H1 (cell line): ENCODE measurements at regions of chr1 and their contacts with region 1.

Region 1: GRCh38 chr1:47449822-47450552 is 12.1 kb downstream of the FOXD2 start:
- DNase-seq: peak in 1 of 2 experiments; percentile 94
- H3K4me3 ChIP-seq: peak overlapping the region in 1 of 4 experiments; percentile 46; a peak in 4 of 8 replicates
- H3K27ac ChIP-seq: no peak overlapping the region
- H3K4me1 ChIP-seq: peaks cover 4 to 24% (median 16%) of the 10 kb centered on the region in 4 experiments
- H3K27me3 ChIP-seq: peaks cover 67 to 74% (median 72%) of the 10 kb centered on the region in 4 experiments
- CTCF ChIP-seq: peak; percentile 87 to 93 (median 93)
- EP300 ChIP-seq: no peak
- POLR2A ChIP-seq: no peak
- RAD21 ChIP-seq: peak; percentile 80 to 87

Region 2: GRCh38 chr1:47437447-47438164 is 12.4 kb before region 1 on chr1 and contains the start of gene FOXD2:
- CTCF ChIA-PET with region 1: interaction called, 46 read pairs
- POLR2A ChIA-PET with region 1: interaction called, 4 read pairs
- DNase-seq: peak; percentile 61 to 99
- H3K4me3 ChIP-seq: peak within 1 kb of the TSS; percentile 16 to 65 (median 49)
- H3K27ac ChIP-seq: no peak within 1 kb of the TSS
- H3K4me1 ChIP-seq: peaks cover 3 to 36% (median 18%) of the 10 kb centered on the region in 4 experiments
- H3K27me3 ChIP-seq: peaks cover 92 to 99% (median 98%) of the 10 kb centered on the region in 4 experiments
- CTCF ChIP-seq: peak in 2 of 3 experiments; percentile 54 to 68; a peak in 3 of 4 replicates
- EP300 ChIP-seq: no peak
- POLR2A ChIP-seq: no peak
- RAD21 ChIP-seq: peak; percentile 30 to 38; a peak in 3 of 4 replicates
- total RNA-seq, gene FOXD2: not detected in 2 replicates

Region 3: GRCh38 chr1:47491341-47491753 is 41.4 kb after region 1 on chr1:
- CTCF ChIA-PET with region 1: interaction called, 11 read pairs
- POLR2A ChIA-PET with region 1: no interaction called
- DNase-seq: no peak
- H3K4me3 ChIP-seq: no peak overlapping the region
- H3K27ac ChIP-seq: no peak overlapping the region
- H3K4me1 ChIP-seq: peaks cover 0 to 6% (median 4%) of the 10 kb centered on the region in 4 experiments; a peak in 4 of 7 replicates
- H3K27me3 ChIP-seq: peaks cover 0 to 9% (median 4%) of the 10 kb centered on the region in 4 experiments; a peak in 5 of 7 replicates
- CTCF ChIP-seq: 0 out of 4 replicates have a peak, but pooled peaks of 1 of the 3 experiments have one; percentile 4
- EP300 ChIP-seq: no peak
- POLR2A ChIP-seq: no peak
- RAD21 ChIP-seq: peak in 1 of 2 experiments; percentile 11; a peak in 1 of 4 replicates

Region 4: DNA sequence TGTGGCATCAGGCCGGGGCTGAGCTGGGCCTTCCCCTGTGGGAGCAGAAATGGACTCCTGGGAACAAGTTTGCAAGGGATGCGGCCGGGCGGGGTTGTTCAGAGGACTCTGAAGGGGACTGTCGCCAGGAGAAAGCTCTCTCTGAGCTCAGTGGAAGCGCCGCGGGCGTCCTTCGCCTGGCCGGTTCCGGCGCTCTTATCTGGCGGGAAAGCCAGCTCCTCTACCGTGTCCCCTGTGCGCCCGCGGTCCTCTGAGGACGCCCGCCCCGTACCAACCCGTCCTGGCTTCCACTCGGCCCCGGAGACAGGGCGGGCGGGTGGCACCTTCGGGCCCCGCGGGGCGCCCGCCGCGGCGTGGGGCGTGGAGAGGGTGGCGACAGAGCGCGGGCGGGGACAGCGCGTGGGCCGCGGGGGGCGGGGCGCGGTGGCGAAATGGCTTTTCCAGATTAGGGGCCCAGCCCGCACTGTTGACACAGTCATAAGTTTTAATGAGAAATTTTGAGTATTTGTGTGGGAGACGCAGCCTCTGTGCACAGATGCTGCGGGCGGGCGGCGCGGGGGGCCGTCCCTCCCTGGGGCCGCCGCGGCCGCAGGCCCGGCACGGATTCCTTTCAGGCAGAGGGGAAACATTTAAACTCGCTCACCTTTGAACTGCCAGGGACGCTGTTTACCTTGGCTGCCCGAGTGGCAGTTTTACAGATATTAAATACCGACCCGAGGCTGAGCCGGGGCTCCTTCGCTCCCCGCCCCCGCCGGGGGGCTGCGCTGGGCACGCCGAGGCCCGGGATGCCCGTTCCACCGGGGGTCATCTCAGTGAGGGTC is 58.1 kb after region 1 on chr1:
- CTCF ChIA-PET with region 1: interaction called, 29 read pairs
- POLR2A ChIA-PET with region 1: no interaction called
- DNase-seq: peak in 1 of 2 experiments; percentile 57
- H3K4me3 ChIP-seq: peak overlapping the region; percentile 32 to 66 (median 43)
- H3K27ac ChIP-seq: no peak overlapping the region
- H3K4me1 ChIP-seq: peaks cover 0 to 5% (median 2%) of the 10 kb centered on the region in 4 experiments; a peak in 3 of 7 replicates
- H3K27me3 ChIP-seq: peaks cover 22 to 53% (median 47%) of the 10 kb centered on the region in 4 experiments
- CTCF ChIP-seq: no peak
- EP300 ChIP-seq: no peak
- POLR2A ChIP-seq: no peak
- RAD21 ChIP-seq: no peak

Region 5: DNA sequence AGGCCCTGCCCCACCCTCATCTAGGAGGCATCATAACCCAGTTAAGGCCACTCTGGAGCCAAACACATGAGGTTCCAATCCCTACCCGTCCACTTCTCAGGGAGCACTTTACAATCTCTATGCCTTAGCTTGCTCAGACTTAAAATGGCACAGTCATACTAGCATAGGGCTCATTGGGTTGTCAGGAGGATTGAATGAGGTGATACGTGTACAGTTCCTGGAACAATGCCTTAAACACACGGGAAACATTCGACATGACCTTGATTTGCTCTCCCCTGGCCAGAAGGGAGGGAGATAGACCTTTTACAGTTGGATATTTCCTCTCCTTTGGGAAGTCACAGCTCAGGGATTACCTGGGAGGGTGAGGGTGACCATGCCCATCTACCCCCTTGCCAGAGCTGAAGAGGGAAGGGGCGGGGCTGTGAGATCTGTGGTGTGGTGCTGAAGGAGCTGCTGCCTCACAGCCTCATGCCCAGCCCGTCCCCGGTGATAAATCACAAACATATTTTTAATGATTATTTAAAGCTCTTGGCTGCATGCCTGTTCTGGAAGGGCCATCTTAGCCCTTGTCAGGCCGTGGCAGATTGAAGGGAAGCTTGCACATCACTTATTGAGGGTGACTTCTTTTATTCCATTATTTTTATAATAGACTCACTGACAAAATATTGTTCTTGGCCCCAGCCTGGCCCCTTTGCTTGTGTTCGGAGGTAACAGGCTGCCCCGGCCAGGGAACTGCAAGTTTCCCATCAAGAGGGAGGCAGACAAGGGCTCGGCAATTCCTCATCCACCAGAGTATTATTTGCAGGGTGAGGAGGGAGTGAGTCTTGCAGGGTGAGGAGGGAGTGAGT is 71.3 kb after region 1 on chr1:
- CTCF ChIA-PET with region 1: interaction called, 30 read pairs
- POLR2A ChIA-PET with region 1: no interaction called
- DNase-seq: no peak
- H3K4me3 ChIP-seq: no peak overlapping the region
- H3K27ac ChIP-seq: no peak overlapping the region
- H3K4me1 ChIP-seq: peaks cover 3 to 16% (median 6%) of the 10 kb centered on the region in 4 experiments; a peak in 6 of 7 replicates
- H3K27me3 ChIP-seq: peaks cover 0 to 4% (median 0%) of the 10 kb centered on the region in 4 experiments; a peak in 4 of 7 replicates
- CTCF ChIP-seq: no peak
- EP300 ChIP-seq: no peak
- POLR2A ChIP-seq: no peak
- RAD21 ChIP-seq: no peak

Region 6: GRCh38 chr1:47703981-47704596 is 254.1 kb after region 1 on chr1:
- CTCF ChIA-PET with region 1: interaction called, 19 read pairs
- POLR2A ChIA-PET with region 1: no interaction called
- DNase-seq: no peak
- H3K4me3 ChIP-seq: no peak overlapping the region
- H3K27ac ChIP-seq: no peak overlapping the region
- H3K4me1 ChIP-seq: peaks cover 0 to 9% (median 1%) of the 10 kb centered on the region in 4 experiments; a peak in 3 of 7 replicates
- H3K27me3 ChIP-seq: peaks cover 19 to 34% (median 32%) of the 10 kb centered on the region in 4 experiments
- CTCF ChIP-seq: peak in 1 of 3 experiments; percentile 4; a peak in 1 of 4 replicates
- EP300 ChIP-seq: no peak
- POLR2A ChIP-seq: no peak
- RAD21 ChIP-seq: peak; percentile 20 to 42; a peak in 3 of 4 replicates

Region 7: GRCh38 chr1:47725992-47726855 is 276.2 kb after region 1 on chr1:
- CTCF ChIA-PET with region 1: interaction called, 10 read pairs
- POLR2A ChIA-PET with region 1: interaction called, 3 read pairs
- DNase-seq: peak in 1 of 2 experiments; percentile 84
- H3K4me3 ChIP-seq: peak overlapping the region in 1 of 4 experiments; percentile 55; a peak in 2 of 8 replicates
- H3K27ac ChIP-seq: no peak overlapping the region
- H3K4me1 ChIP-seq: peaks cover 0 to 14% (median 9%) of the 10 kb centered on the region in 4 experiments; a peak in 6 of 7 replicates
- H3K27me3 ChIP-seq: peaks cover 14 to 37% (median 31%) of the 10 kb centered on the region in 4 experiments
- CTCF ChIP-seq: peak; percentile 89 to 98 (median 97)
- EP300 ChIP-seq: no peak
- POLR2A ChIP-seq: no peak
- RAD21 ChIP-seq: peak; percentile 88